WTC11 (cell line): ENCODE measurements at regions of chr16 and their contacts with region 1.

Region 1: GRCh38 chr16:30813821-30814189 is 26.8 kb upstream of the ZNF629 start:
- DNase-seq: no peak
- ATAC-seq: no peak
- H3K4me3 Mint-ChIP-seq: peak overlapping the region; percentile 65
- H3K27ac Mint-ChIP-seq: no peak overlapping the region
- H3K4me1 Mint-ChIP-seq: peaks cover 6% of the 10 kb centered on the region; the same call in 1 of the 2 replicates
- H3K27me3 Mint-ChIP-seq: peaks cover 38% of the 10 kb centered on the region
- CTCF ChIP-seq: no peak

Region 2: GRCh38 chr16:30155188-30155587 is 658.6 kb before region 1 on chr16:
- CTCF ChIA-PET with region 1: no interaction called
- POLR2A ChIA-PET with region 1: interaction called, 15 read pairs
- DNase-seq: no peak
- ATAC-seq: no peak
- H3K4me3 Mint-ChIP-seq: no peak overlapping the region
- H3K27ac Mint-ChIP-seq: no peak overlapping the region
- H3K4me1 Mint-ChIP-seq: no peaks in the 10 kb centered on the region
- H3K27me3 Mint-ChIP-seq: peaks cover 19% of the 10 kb centered on the region
- CTCF ChIP-seq: no peak

Region 3: GRCh38 chr16:30650369-30651123 is 163.3 kb before region 1 on chr16 and contains the start of gene PRR14:
- CTCF ChIA-PET with region 1: no interaction called
- POLR2A ChIA-PET with region 1: no interaction called
- DNase-seq: peak; percentile 98
- ATAC-seq: peak; percentile 89
- H3K4me3 Mint-ChIP-seq: peak within 1 kb of the TSS; percentile 97
- H3K27ac Mint-ChIP-seq: peak within 1 kb of the TSS; percentile 98
- H3K4me1 Mint-ChIP-seq: peaks cover 15% of the 10 kb centered on the region
- H3K27me3 Mint-ChIP-seq: peaks cover 43% of the 10 kb centered on the region
- CTCF ChIP-seq: 0 out of 2 replicates have a peak, but pooled peaks have one; percentile 16
- total RNA-seq, gene PRR14: 21.9 to 24.3 TPM (median 22.0 TPM) in 3 replicates

Region 4: GRCh38 chr16:30775392-30776188 is 38.2 kb before region 1 on chr16:
- CTCF ChIA-PET with region 1: interaction called, 18 read pairs
- POLR2A ChIA-PET with region 1: no interaction called
- DNase-seq: peak; percentile 88
- ATAC-seq: peak; percentile 80
- H3K4me3 Mint-ChIP-seq: peak overlapping the region; percentile 91
- H3K27ac Mint-ChIP-seq: peak overlapping the region; percentile 98
- H3K4me1 Mint-ChIP-seq: peaks cover 25% of the 10 kb centered on the region
- H3K27me3 Mint-ChIP-seq: peaks cover 3% of the 10 kb centered on the region
- CTCF ChIP-seq: no peak

Region 5: GRCh38 chr16:30797670-30798309 is 16.0 kb before region 1 on chr16:
- CTCF ChIA-PET with region 1: interaction called, 15 read pairs
- POLR2A ChIA-PET with region 1: no interaction called
- DNase-seq: no peak
- ATAC-seq: peak; percentile 90
- H3K4me3 Mint-ChIP-seq: no peak overlapping the region
- H3K27ac Mint-ChIP-seq: no peak overlapping the region
- H3K4me1 Mint-ChIP-seq: 0 out of 2 replicates have a peak, but pooled peaks cover 4% of the 10 kb centered on the region
- H3K27me3 Mint-ChIP-seq: peaks cover 39% of the 10 kb centered on the region
- CTCF ChIP-seq: no peak

Region 6: DNA sequence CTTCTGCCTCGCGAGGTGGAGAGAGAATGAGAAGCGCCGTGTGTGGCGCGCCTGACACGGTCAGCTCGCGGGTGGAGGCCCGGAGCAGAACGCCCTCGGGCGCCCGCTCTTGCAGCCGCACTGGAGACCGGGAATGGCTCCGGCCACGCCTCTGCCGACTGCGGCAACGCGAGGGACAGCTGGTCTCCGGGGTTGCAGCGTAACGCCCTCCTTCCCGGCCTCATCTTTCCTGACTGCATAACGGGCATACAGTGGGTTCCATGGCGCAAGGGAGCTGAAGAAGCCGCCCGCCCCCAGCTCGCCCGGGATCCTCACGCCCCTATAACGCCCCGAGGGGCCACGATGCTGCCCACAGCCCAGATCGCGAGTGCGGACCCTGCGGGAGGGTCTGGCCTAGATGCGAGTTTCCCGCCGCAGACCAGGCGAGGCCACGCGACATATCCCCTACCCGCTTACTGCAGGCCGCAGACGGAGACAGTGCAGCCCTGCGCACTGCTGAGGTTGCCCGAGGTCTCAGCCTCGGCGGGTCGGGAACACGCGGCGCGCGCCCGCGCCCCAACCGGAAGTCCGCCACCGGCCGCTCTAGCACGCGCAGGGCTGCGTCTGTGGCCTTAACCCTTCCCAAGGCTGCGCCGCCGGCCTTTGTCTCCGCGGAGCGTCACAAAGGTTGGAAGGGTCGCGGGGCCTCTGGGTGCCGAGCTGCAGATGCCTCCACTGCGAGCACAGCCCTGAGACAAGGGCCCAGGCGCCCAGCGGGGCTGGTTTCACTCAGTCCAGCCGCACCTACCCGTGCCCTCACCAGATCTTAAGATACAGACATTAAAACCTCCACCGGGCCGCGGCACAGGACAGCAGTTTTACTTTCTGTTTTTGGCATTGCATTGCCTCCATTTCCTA is 61.3 kb after region 1 on chr16:
- CTCF ChIA-PET with region 1: interaction called, 17 read pairs
- POLR2A ChIA-PET with region 1: no interaction called
- DNase-seq: peak; percentile 91
- ATAC-seq: peak; percentile 91
- H3K4me3 Mint-ChIP-seq: peak overlapping the region; percentile 96
- H3K27ac Mint-ChIP-seq: peak overlapping the region; percentile 97
- H3K4me1 Mint-ChIP-seq: peaks cover 12% of the 10 kb centered on the region
- H3K27me3 Mint-ChIP-seq: peaks cover 40% of the 10 kb centered on the region
- CTCF ChIP-seq: no peak

Region 7: GRCh38 chr16:31052124-31052523 is 238.3 kb after region 1 on chr16:
- CTCF ChIA-PET with region 1: no interaction called
- POLR2A ChIA-PET with region 1: no interaction called
- DNase-seq: no peak
- ATAC-seq: no peak
- H3K4me3 Mint-ChIP-seq: no peak overlapping the region
- H3K27ac Mint-ChIP-seq: no peak overlapping the region
- H3K4me1 Mint-ChIP-seq: peaks cover 15% of the 10 kb centered on the region
- H3K27me3 Mint-ChIP-seq: peaks cover 15% of the 10 kb centered on the region
- CTCF ChIP-seq: no peak